ENCODE measurements at regions of chr5 and their contacts with region 1.

Region 1: DNA sequence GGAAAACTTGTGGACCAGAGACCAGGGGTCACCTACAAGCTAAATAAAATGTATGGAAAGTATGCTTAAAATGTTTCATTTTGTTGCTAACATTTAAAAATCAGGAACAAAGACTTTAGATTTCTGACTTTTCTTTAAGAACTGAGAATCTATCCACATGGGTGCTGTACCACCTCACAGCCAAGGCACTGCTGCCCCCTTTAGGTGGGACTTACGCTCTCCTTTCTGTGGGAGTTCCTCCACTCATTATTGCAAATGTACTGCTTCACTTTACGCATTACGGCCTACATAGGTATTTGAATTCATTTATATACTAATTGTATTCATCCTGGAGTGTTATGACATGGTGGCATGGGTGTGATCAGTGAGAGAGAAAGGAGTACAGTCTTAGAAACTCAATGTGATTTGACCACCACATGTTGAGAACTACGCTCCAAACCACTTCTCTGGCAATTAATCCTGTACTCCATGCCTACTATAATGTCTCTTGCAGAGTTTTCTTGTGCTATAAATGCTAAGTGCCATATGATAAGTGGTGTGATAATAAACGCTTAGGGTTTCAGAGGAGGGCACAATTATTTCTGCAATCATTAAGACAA is 24.7 kb upstream of the CETN3 start:
- DNase-seq: no peak
- H3K4me3 ChIP-seq: no peak overlapping the region
- H3K27ac ChIP-seq: no peak overlapping the region
- H3K27me3 ChIP-seq: peaks cover 4% of the 10 kb centered on the region
- CTCF ChIP-seq: peak; percentile 81

Region 2: DNA sequence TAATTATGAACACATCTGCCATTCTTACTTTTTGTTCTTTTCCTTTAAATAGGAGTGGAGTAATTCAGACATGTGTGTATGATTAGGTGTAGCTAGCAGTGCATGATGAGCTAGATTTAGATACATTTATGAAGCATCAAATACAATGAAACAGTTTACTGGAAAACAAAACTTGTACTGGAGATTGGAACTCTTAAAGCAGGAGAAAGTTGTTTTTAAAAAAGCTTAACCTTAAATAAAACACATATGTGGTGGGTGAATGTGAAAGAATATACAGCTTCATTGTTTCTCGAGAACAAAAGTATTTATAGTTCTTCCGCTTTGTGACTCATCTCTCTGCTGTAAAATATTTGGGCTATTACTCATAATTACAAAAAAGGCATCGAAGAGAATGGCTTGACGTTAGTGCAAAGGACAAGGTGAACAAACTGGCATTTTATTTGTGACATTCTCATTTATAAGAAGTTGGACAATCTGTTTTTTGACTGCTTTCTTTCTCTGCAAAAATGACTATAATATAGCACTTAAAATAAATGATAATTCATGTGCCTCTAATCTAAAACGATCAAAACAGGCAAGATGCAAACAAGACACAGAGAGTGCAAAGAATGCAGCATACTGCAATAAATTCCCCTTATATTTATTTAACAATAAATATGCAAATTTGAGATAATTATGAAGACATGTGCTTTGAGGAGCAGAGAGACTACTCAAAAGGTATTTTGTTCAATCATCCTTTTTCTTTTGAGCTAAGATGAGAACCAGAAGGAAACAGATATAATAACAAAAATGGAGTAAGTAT is 503.4 kb before region 1 on chr5:
- CTCF ChIA-PET with region 1: no interaction called
- POLR2A ChIA-PET with region 1: no interaction called
- DNase-seq: peak; percentile 4
- H3K4me3 ChIP-seq: no peak overlapping the region
- H3K27ac ChIP-seq: no peak overlapping the region
- H3K27me3 ChIP-seq: no peaks in the 10 kb centered on the region
- CTCF ChIP-seq: no peak

Region 3: DNA sequence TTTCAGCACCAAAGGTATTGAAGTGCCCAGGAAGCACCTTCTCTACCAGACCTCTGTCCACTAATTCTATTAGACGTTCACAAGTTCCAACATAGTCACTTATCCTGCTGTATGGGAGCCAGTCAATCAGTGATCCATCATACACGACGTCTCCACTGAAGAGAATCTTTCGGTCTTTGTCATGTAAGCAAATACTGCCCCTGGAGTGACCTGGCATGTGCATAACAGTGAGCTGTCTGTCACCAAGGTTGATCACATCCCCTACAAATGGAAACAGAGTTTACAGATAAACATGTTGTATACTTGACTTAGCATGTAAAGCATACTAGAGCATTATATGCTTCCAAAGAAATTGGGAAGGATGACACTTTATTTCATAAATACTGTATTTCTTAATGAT is 27.1 kb after region 1 on chr5:
- CTCF ChIA-PET with region 1: interaction called, 11 read pairs
- POLR2A ChIA-PET with region 1: no interaction called
- DNase-seq: no peak
- H3K4me3 ChIP-seq: no peak overlapping the region
- H3K27ac ChIP-seq: no peak overlapping the region
- H3K27me3 ChIP-seq: no peaks in the 10 kb centered on the region
- CTCF ChIP-seq: no peak

Region 4: DNA sequence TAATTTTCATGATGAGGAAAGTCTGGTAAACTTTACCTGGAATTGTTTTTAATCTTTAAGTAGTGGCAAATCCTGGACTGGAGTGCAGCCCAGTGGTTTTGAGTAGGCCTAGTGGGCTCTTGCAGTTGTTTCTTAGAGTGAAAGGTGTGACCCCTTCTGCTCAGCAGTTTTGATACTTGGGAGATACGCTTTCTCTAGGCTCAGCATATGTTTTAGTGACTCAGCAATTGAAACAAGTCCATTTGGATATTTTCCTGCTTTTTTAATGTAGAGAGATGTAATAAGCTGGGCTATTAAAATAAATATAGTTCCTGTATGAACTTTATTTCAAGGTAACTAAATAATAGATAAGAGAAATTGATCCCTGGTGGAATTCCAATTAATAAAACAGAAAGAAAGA is 46.5 kb after region 1 on chr5:
- CTCF ChIA-PET with region 1: no interaction called
- POLR2A ChIA-PET with region 1: no interaction called
- DNase-seq: no peak
- H3K4me3 ChIP-seq: no peak overlapping the region
- H3K27ac ChIP-seq: no peak overlapping the region
- H3K27me3 ChIP-seq: no peaks in the 10 kb centered on the region
- CTCF ChIP-seq: no peak

Region 5: DNA sequence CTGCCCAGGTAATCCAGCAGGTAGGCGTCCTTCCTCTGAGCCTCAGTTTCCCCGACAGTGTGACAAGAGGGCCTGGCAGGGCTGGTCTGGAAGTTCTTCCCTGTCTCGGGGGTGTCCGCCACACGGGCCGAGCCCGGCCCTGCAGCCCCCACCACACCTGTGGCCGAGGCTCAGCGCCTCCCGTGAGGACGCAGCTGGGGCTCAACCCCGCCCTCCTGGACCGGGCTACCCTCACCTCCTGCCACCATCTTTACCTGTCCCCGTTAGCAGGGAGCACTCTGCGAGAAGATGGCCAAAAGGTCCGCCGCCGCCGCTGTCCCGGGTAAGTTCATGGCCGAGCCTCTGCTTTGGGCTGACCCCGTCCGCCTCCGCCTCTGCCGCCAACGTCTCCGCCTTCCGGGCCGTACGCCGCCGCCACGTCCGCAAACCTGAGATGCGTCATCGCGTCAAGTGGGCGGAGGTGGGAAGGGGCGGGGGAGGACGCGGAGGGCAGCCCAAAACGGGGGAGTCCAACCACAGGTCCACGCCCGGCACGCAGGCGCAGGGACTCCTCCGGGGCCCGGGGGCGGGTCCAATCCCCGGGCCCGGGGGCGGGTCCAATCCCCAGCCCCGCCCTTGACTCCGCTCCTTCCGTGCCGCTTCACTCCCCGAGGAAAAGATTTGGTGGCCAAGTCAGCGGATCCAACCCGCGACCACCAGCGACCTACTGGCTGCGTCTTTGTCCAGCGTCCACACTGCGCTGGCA is 95.2 kb after region 1 on chr5 and contains the start of gene LYSMD3:
- CTCF ChIA-PET with region 1: interaction called, 62 read pairs
- POLR2A ChIA-PET with region 1: no interaction called
- DNase-seq: peak; percentile 94
- H3K4me3 ChIP-seq: peak within 1 kb of the TSS; percentile 94
- H3K27ac ChIP-seq: peak within 1 kb of the TSS; percentile 94
- H3K27me3 ChIP-seq: peaks cover 8% of the 10 kb centered on the region
- CTCF ChIP-seq: no peak
- polyA plus RNA-seq, gene LYSMD3: 15.6 and 25.8 TPM in 2 replicates

Region 6: GRCh38 chr5:90606539-90606938 is 172.3 kb after region 1 on chr5:
- CTCF ChIA-PET with region 1: interaction called, 17 read pairs
- POLR2A ChIA-PET with region 1: no interaction called
- DNase-seq: no peak
- H3K4me3 ChIP-seq: no peak overlapping the region
- H3K27ac ChIP-seq: no peak overlapping the region
- H3K27me3 ChIP-seq: no peaks in the 10 kb centered on the region
- CTCF ChIP-seq: 0 out of 2 replicates have a peak, but pooled peaks have one; percentile 14

Region 7: DNA sequence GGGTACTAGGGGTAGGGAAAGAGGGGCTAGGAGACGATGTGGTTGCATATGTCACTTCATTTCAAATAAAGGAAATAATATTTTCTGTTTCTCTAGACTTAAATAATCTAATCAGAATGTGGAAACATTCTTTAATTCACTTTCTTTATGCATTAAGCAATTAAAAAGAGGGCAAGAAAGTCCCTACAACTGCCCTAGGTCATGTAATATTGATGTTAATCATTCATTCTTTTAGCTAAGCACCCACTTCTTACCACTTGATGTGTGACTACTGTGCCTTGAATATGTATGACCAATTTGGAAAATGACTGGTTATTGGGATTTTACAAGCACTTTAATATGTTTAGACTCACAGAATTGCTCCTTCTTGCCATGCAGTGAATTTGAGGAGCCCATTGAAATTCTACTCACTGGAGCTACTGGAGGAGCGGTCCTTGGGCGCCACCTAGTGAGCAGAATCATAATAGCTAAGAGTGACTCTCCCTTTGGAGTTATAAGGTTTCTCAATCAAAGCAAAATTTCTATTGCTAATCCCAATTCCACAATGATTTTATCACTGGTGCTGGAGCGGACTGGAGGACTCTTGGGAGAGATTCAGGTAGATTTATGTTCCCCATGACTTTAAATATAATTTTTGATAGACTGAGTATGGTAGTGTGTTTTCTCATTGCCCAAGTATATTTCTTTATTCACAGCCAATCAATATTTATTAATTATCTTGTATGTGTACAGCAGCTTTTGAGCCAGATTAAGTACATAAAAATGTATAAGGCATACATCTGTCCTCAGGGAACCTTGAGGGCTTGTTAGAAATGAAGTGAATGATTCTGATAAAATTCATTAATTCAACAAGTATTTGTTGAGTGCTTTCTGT is 349.5 kb after region 1 on chr5:
- CTCF ChIA-PET with region 1: interaction called, 57 read pairs
- POLR2A ChIA-PET with region 1: no interaction called
- DNase-seq: peak; percentile 29
- H3K4me3 ChIP-seq: no peak overlapping the region
- H3K27ac ChIP-seq: no peak overlapping the region
- H3K27me3 ChIP-seq: no peaks in the 10 kb centered on the region
- CTCF ChIP-seq: peak; percentile 95